ENCODE measurements at regions of chr12 and their contacts with region 1.

Region 1: GRCh38 chr12:89893972-89894706 is 185.5 kb upstream of the ATP2B1 start:
- DNase-seq: peak; percentile 48
- H3K4me3 ChIP-seq: no peak overlapping the region
- H3K27ac ChIP-seq: no peak overlapping the region
- H3K4me1 ChIP-seq: peaks cover 14% of the 10 kb centered on the region
- H3K27me3 ChIP-seq: no peaks in the 10 kb centered on the region
- CTCF ChIP-seq: no peak

Region 2: DNA sequence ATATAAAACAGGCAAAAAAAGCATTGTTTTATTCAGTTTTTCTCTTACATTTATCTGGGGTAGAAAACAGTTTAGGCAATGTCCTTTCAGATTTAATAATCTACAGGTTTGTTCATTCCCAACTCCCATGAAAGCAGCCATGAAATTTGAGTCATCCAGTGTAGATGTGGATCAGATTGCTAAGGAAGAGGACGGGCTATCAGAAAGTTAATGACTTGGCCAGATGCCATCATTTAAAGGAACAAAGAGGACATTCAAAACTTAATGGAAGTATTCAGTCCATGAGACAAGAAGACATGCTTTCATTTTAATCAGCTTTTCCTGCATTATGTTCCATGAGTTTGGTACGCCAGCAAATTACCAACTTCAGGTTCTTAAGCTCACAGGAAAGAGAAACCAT is 337.2 kb before region 1 on chr12:
- CTCF ChIA-PET with region 1: no interaction called
- dilution Hi-C with region 1: no loop called
- in situ Hi-C with region 1: no loop called
- intact Hi-C with region 1: no loop called
- DNase-seq: peak; percentile 69
- H3K4me3 ChIP-seq: no peak overlapping the region
- H3K27ac ChIP-seq: no peak overlapping the region
- H3K4me1 ChIP-seq: peaks cover 8% of the 10 kb centered on the region
- H3K27me3 ChIP-seq: no peaks in the 10 kb centered on the region
- CTCF ChIP-seq: no peak

Region 3: DNA sequence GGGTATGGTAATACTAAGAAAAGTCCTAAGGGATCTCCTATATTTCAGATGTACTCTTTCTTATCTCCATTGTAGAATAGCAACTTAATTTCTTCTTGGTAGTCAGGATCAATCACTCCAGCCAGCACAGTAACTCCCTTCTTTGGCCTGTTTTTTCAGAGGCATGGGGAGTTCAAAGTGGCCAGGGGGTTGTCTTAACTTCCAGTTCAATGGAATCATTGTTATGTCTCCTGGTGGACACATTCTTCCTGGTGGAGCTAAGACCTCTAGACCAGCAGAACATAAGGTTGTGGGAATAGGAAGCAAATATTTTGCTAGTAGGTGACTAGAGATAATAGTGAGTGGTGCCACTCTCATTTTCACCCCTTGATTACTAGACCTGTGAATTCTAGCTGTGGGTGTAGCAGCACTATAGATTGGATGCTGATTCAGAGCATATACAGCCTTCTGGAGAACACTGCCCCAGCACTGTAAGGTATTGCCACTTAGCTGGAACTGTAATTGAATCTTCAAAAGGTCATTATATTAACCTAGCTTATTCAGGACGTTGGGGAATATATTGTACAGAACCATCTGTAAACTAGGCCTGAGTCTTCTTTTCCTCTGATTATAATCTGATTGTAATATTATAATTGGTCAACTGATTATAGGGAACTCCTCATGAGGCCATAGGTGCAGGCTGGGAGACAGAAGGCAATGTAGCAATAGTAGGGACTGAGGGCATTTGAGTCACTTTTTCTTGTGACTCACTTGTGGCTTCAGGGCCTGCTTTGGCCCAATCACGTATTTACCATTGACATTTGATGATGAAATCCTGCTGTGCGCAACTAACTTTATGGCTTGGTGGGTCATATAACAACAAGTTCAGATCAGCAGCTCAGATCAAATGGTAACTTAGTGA is 125.3 kb before region 1 on chr12:
- CTCF ChIA-PET with region 1: no interaction called
- dilution Hi-C with region 1: no loop called
- in situ Hi-C with region 1: no loop called
- intact Hi-C with region 1: loop called (anchors 1 kb)
- DNase-seq: peak; percentile 99
- H3K4me3 ChIP-seq: no peak overlapping the region
- H3K27ac ChIP-seq: peak overlapping the region; percentile 84
- H3K4me1 ChIP-seq: peaks cover 26% of the 10 kb centered on the region
- H3K27me3 ChIP-seq: no peaks in the 10 kb centered on the region
- CTCF ChIP-seq: no peak

Region 4: GRCh38 chr12:89949457-89950195 is 55.5 kb after region 1 on chr12:
- CTCF ChIA-PET with region 1: interaction called, 3 read pairs
- dilution Hi-C with region 1: no loop called
- in situ Hi-C with region 1: no loop called
- intact Hi-C with region 1: loop called (anchors 5 kb)
- DNase-seq: peak; percentile 91
- H3K4me3 ChIP-seq: no peak overlapping the region
- H3K27ac ChIP-seq: peak overlapping the region; percentile 91
- H3K4me1 ChIP-seq: peaks cover 46% of the 10 kb centered on the region
- H3K27me3 ChIP-seq: no peaks in the 10 kb centered on the region
- CTCF ChIP-seq: peak; percentile 15 to 41

Region 5: DNA sequence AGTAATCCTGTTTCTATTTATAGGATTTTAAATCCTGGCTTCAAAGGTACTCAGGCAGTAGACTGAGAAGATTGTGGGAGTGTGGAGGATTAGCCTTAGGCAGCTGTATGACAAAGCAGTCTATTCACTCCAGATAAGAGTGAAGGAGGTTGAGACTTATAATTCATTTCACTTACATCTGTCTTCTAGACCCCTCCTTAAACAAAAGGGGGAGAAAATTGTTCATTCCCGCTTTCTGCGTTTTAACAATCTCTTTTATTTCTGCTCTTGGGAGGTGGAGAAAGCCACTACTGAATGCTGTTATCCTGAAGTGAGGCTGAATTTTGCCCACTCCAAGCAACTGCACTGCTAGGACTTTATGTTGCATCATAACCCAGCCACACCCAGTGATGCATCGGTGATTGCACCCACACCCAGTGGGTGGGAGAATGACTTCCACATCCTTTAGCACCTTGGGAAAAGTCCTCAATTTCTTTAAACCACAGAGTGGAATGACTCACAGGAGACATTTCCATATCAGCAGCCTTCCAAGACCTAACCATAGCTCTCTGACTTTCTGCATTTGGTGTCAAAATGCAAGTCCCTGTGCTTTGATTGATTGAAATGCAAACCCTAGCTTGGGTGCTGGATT is 197.0 kb after region 1 on chr12:
- CTCF ChIA-PET with region 1: no interaction called
- dilution Hi-C with region 1: no loop called
- in situ Hi-C with region 1: no loop called
- intact Hi-C with region 1: loop called (anchors 5 kb)
- DNase-seq: peak; percentile 98
- H3K4me3 ChIP-seq: peak overlapping the region in 1 of 3 experiments; percentile 25
- H3K27ac ChIP-seq: peak overlapping the region; percentile 96
- H3K4me1 ChIP-seq: peaks cover 17% of the 10 kb centered on the region
- H3K27me3 ChIP-seq: no peaks in the 10 kb centered on the region
- CTCF ChIP-seq: no peak